ENCODE measurements at regions of chr13 and their contacts with region 1.

Region 1: DNA sequence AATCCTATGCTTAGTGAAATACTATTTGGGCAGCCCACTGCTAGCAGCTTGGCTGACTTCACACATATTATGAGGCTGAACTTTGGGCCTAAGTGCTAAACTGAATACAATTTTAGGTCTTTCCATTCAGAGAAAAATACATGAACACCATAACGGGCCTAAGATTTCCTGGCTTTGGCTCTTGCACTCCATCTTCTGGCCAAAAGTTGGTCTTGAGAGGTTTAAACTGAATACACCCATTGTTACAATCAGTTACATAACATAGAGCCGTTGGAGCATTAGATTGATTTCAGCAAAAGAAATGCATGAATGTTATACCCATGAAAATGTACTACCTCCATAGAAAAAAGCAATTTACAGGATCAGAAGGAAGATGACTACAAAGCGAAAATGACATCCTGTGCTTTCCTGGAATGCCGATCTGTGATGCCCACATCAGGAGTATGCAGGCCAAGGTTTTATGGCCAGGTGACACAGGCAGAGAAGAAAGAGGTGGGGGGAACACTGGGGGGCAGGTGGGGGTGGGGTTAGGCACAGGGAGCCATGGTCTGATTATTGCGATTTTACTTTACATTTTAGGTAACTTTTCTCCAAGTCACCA is 11.1 kb upstream of the SHISA2 start:
- DNase-seq: no peak
- ATAC-seq: peak; percentile 84; the same call in 1 of the 2 replicates
- H3K4me3 ChIP-seq: no peak overlapping the region
- H3K27ac ChIP-seq: no peak overlapping the region
- H3K4me1 ChIP-seq: no peaks in the 10 kb centered on the region
- H3K27me3 ChIP-seq: no peaks in the 10 kb centered on the region; the same call in 1 of the 2 replicates
- CTCF ChIP-seq: peak; percentile 73

Region 2: GRCh38 chr13:25574437-25575411 is 488.2 kb before region 1 on chr13:
- CTCF ChIA-PET with region 1: no interaction called
- POLR2A ChIA-PET with region 1: no interaction called
- in situ Hi-C with region 1: no loop called
- intact Hi-C with region 1: loop called (anchors 1 kb)
- DNase-seq: peak; percentile 59
- ATAC-seq: peak; percentile 95
- H3K4me3 ChIP-seq: no peak overlapping the region
- H3K27ac ChIP-seq: no peak overlapping the region
- H3K4me1 ChIP-seq: no peaks in the 10 kb centered on the region
- H3K27me3 ChIP-seq: peaks cover 2% of the 10 kb centered on the region; the same call in 1 of the 2 replicates
- CTCF ChIP-seq: peak; percentile 79

Region 3: GRCh38 chr13:25752957-25753551 is 309.9 kb before region 1 on chr13:
- CTCF ChIA-PET with region 1: no interaction called
- POLR2A ChIA-PET with region 1: no interaction called
- in situ Hi-C with region 1: no loop called
- intact Hi-C with region 1: loop called (anchors 10 kb)
- DNase-seq: no peak
- ATAC-seq: no peak
- H3K4me3 ChIP-seq: no peak overlapping the region
- H3K27ac ChIP-seq: no peak overlapping the region
- H3K4me1 ChIP-seq: no peaks in the 10 kb centered on the region
- H3K27me3 ChIP-seq: no peaks in the 10 kb centered on the region
- CTCF ChIP-seq: no peak

Measured in Panc1 (cell line).